Activated CD4-positive, alpha-beta memory T cell treated with anti-CD3 and anti-CD28 coated beads, Interleukin-2, amount 10 ng/mL, durations not matched to agents 7 days and 5 days (primary cell): ENCODE measurements at regions of chr7 and their contacts with region 1.

Region 1: GRCh38 chr7:87213811-87214210 is 5.7 kb downstream of the TMEM243 start:
- DNase-seq: no peak
- H3K4me3 Mint-ChIP-seq: no peak overlapping the region
- H3K27ac Mint-ChIP-seq: peak overlapping the region; percentile 41
- H3K4me1 Mint-ChIP-seq: peaks cover 70% of the 10 kb centered on the region
- H3K27me3 Mint-ChIP-seq: no peaks in the 10 kb centered on the region

Region 2: GRCh38 chr7:86863452-86863851 is 350.4 kb before region 1 on chr7:
- CTCF ChIA-PET with region 1: no interaction called
- POLR2A ChIA-PET with region 1: no interaction called
- DNase-seq: no peak
- H3K4me3 Mint-ChIP-seq: no peak overlapping the region
- H3K27ac Mint-ChIP-seq: no peak overlapping the region
- H3K4me1 Mint-ChIP-seq: no peaks in the 10 kb centered on the region
- H3K27me3 Mint-ChIP-seq: peaks cover 2% of the 10 kb centered on the region

Region 3: GRCh38 chr7:87199700-87200450 is 13.9 kb before region 1 on chr7:
- CTCF ChIA-PET with region 1: interaction called, 13 read pairs
- POLR2A ChIA-PET with region 1: interaction called, 16 read pairs
- DNase-seq: no peak
- H3K4me3 Mint-ChIP-seq: no peak overlapping the region
- H3K27ac Mint-ChIP-seq: no peak overlapping the region
- H3K4me1 Mint-ChIP-seq: peaks cover 25% of the 10 kb centered on the region
- H3K27me3 Mint-ChIP-seq: no peaks in the 10 kb centered on the region

Region 4: DNA sequence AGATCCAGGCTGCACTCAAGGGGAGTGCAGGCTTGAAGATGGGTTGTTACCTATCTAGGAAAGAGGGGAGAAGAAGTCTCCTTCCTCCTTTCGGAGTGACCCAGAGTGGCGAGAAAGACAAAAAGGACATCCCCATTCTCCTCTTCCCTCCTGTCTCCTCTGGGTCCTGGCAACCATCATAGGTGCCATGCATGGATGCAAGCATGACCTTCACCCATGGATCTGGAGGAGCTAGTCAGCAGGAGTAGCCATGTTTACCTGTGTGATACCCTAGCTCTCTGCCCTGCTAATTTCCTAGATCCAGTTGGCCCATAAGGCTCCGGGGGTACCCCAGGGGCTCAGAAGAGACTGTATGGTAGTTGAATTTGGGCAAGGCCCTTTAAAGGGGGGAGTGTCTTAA is 114.5 kb after region 1 on chr7:
- CTCF ChIA-PET with region 1: no interaction called
- POLR2A ChIA-PET with region 1: no interaction called
- DNase-seq: no peak
- H3K4me3 Mint-ChIP-seq: no peak overlapping the region
- H3K27ac Mint-ChIP-seq: no peak overlapping the region
- H3K4me1 Mint-ChIP-seq: no peaks in the 10 kb centered on the region
- H3K27me3 Mint-ChIP-seq: no peaks in the 10 kb centered on the region

Region 5: GRCh38 chr7:87345166-87345927 is 131.5 kb after region 1 on chr7 and contains the start of gene CROT:
- CTCF ChIA-PET with region 1: no interaction called
- POLR2A ChIA-PET with region 1: interaction called, 10 read pairs
- DNase-seq: peak; percentile 95
- H3K4me3 Mint-ChIP-seq: peak within 1 kb of the TSS; percentile 86
- H3K27ac Mint-ChIP-seq: peak within 1 kb of the TSS; percentile 88
- H3K4me1 Mint-ChIP-seq: peaks cover 48% of the 10 kb centered on the region
- H3K27me3 Mint-ChIP-seq: no peaks in the 10 kb centered on the region
- total RNA-seq, gene CROT: 9.5 to 12.6 TPM